Activated naive CD4-positive, alpha-beta T cell treated with anti-CD3 and anti-CD28 coated beads for 36 hours (primary cell): ENCODE measurements at regions of chr9 and their contacts with region 1.

Region 1: GRCh38 chr9:129783516-129784361 is 19.2 kb upstream of the TOR1B start:
- DNase-seq: peak; percentile 85
- H3K4me3 Mint-ChIP-seq: no peak overlapping the region
- H3K27ac Mint-ChIP-seq: no peak overlapping the region
- H3K4me1 Mint-ChIP-seq: peaks cover 5% of the 10 kb centered on the region
- H3K27me3 Mint-ChIP-seq: no peaks in the 10 kb centered on the region

Region 2: GRCh38 chr9:129726322-129727160 is 57.2 kb before region 1 on chr9:
- CTCF ChIA-PET with region 1: interaction called, 70 read pairs
- intact Hi-C with region 1: loop called (anchors 1 kb)
- DNase-seq: peak; percentile 76
- H3K4me3 Mint-ChIP-seq: peak overlapping the region; percentile 36
- H3K27ac Mint-ChIP-seq: no peak overlapping the region
- H3K4me1 Mint-ChIP-seq: peaks cover 2% of the 10 kb centered on the region
- H3K27me3 Mint-ChIP-seq: no peaks in the 10 kb centered on the region

Region 3: DNA sequence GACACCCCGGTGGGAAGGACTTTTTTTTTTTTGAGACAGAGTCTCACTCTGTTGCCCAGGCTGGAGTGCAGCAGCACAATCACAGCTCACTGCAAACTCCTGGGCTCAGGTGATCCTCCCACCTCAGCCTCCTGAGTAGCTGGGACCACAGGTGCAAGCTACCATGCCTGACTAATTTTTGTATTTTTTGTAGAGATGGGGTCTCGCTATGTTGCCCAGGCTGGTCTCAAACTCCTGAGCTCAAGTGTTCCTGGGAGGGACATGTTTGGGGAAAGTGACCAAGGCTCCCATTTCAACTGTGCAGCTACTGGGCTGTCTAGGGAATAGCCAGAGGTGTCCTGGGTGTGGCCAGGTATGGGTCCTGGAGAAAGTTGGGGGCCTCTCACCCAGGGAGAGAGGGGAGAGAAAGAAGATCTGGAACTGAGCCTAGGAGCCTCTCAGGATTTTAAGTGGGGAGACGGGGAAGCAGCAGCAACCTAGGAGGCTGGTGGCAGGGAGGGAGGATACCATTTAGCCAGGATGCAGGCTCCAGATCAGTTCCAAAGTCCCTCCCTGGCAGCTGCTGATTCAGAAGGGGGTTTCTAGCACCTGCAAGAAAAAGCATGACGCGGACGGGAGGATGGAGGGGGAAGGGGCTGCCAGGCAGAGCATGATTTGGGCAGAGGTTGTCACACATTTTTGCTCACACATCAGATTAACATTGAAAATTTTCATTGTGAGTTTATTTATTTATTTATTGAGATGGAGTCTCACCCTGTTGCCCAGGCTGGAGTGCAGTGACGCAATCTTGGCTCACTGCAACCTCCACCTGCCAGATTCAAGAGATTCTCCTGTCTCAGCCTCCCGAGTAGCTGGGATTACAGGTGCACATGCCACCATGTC is 12.5 kb after region 1 on chr9:
- CTCF ChIA-PET with region 1: interaction called, 14 read pairs
- intact Hi-C with region 1: no loop called
- DNase-seq: no peak
- H3K4me3 Mint-ChIP-seq: no peak overlapping the region
- H3K27ac Mint-ChIP-seq: no peak overlapping the region
- H3K4me1 Mint-ChIP-seq: no peaks in the 10 kb centered on the region
- H3K27me3 Mint-ChIP-seq: no peaks in the 10 kb centered on the region